ENCODE measurements at regions of chr3 and their contacts with region 1.

Region 1: DNA sequence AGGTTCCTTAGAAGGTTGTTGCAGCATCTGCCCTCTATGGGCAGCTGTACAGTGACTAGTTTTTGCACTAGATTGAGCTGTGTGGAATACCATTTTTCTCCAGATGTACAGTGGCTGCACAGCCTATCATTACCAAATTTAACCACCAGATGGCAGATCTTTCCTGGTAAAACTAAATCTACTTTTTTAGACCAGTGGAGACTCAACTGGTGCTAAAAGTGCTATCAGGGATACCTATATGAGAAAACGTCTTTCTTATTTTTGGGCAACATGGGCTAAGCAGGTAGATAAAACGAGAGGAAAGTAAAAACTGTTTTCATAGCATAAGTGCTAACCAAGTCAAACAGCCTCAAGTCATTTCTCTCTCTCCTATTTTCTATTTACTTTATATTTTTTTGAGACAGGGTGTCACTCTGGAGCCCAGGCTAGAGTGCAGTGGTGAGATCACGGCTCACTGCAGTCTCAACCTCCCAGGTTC is 21.2 kb downstream of the IGSF10 start:
- DNase-seq: peak; percentile 36
- H3K4me3 ChIP-seq: no peak overlapping the region
- H3K27ac ChIP-seq: no peak overlapping the region
- H3K4me1 ChIP-seq: no peaks in the 10 kb centered on the region
- H3K27me3 ChIP-seq: no peaks in the 10 kb centered on the region
- CTCF ChIP-seq: peak; percentile 60 to 86 (median 80)
- POLR2A ChIP-seq: no peak

Region 2: GRCh38 chr3:151838583-151839312 is 399.1 kb after region 1 on chr3:
- intact Hi-C with region 1: loop called (anchors 5 kb)
- DNase-seq: peak; percentile 65
- H3K4me3 ChIP-seq: no peak overlapping the region
- H3K27ac ChIP-seq: no peak overlapping the region
- H3K4me1 ChIP-seq: no peaks in the 10 kb centered on the region
- H3K27me3 ChIP-seq: no peaks in the 10 kb centered on the region
- CTCF ChIP-seq: peak; percentile 70 to 81 (median 75)
- POLR2A ChIP-seq: no peak

Region 3: DNA sequence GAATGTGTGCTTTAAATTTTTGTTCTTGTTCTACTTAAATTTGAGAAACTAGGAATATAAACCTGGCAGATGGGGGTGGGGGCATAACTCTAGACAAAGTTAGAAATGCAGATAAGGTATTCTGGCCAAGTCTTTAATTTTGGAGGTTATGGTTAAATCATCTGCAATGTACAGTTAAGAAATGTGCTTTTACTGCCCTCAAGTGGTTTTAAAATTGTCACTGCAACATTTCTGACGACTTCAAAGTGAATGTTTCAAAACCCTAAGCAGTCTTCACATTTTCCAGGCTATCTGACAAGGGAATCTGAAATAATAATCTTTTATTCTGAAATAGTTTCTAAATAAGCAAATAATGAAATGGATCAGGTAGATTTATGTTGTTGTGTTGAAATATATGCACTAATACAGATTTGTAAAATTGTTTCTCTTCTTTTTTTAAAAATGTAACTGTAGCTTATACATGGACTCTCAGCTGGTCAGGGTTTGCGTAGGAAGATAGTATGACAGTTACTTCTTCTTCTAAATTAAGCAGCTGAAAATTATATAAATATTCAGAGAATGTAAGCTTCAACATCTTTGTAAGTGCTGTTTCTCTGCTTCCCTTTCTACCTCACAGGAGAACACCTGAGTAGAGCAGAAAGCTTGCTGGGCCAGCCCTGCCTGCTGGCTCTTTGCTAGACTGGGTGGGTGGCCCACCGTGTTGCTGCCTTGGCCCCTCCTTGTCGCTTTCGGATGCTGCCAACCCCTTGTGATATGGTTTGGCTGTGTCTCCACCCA is 478.8 kb after region 1 on chr3:
- intact Hi-C with region 1: loop called (anchors 10 kb)
- DNase-seq: no peak
- H3K4me3 ChIP-seq: no peak overlapping the region
- H3K27ac ChIP-seq: no peak overlapping the region
- H3K4me1 ChIP-seq: no peaks in the 10 kb centered on the region
- H3K27me3 ChIP-seq: no peaks in the 10 kb centered on the region
- CTCF ChIP-seq: peak in 3 of 4 experiments; percentile 24 to 59 (median 50)
- POLR2A ChIP-seq: no peak

Measured in prostate gland (tissue), 2 donors.